Dendritic cell treated with granulocyte-macrophage colony-stimulating factor and Interleukin-4, amounts not matched to agents 40 ng/mL and 50 ng/mL, for 4 days (primary cell): ENCODE measurements at regions of chr16 and their contacts with region 1.

Region 1: GRCh38 chr16:48271728-48272127 is 24.4 kb upstream of the ABCC11 start:
- H3K4me3 Mint-ChIP-seq: no peak overlapping the region
- H3K27ac Mint-ChIP-seq: no peak overlapping the region
- H3K4me1 Mint-ChIP-seq: no peaks in the 10 kb centered on the region
- H3K27me3 Mint-ChIP-seq: no peaks in the 10 kb centered on the region

Region 2: DNA sequence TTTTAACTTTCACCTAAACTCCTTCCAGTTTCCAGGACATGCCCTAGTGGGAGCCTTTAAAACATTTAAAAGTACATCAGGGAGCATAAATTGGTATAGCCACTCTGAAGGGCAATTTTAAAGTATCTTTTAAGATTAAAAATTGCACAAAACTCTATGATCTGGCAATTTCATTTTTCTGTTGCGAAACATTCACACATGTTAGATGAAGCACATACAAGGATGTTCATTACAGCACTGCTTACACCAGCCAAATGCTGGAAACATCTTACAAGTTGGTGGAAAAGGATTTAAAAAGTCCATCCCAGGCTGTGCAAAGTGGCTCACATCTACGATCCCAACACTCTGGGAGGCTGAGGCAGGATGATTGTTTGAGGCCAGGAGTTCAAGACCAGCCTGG is 54.0 kb before region 1 on chr16:
- intact Hi-C with region 1: no loop called
- H3K4me3 Mint-ChIP-seq: no peak overlapping the region
- H3K27ac Mint-ChIP-seq: no peak overlapping the region
- H3K4me1 Mint-ChIP-seq: no peaks in the 10 kb centered on the region
- H3K27me3 Mint-ChIP-seq: no peaks in the 10 kb centered on the region

Region 3: DNA sequence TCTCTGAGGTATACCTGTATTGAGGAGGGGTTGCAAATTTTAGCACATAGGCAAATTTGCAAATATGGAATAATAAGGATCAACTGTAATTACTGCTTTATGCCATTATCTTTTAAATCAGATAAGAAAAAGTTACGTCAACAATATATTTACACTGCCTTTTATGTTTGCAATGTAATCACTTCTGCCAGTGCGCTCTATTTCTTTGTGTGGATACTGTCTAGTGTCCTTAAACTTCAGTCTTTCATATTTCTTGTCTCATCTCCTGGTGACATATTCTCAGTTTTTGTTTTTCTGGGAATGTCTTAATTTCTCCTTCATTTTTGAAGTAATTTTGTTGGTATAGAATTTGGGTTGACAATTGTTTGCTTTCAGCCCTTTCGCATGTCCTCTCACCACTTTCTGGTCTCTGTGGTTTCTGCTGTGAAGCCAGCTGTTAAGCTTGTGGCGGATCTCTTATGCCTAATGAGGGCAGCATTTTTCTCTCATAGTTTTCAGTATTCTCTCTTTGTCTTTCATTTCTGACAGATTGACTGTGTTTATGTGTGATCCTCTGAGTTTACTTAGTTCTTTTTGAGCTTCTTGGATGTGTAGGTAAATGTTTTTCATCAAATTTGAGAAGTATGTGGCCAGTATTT is 13.2 kb after region 1 on chr16:
- intact Hi-C with region 1: loop called (anchors 2 kb)
- H3K4me3 Mint-ChIP-seq: no peak overlapping the region
- H3K27ac Mint-ChIP-seq: no peak overlapping the region
- H3K4me1 Mint-ChIP-seq: no peaks in the 10 kb centered on the region
- H3K27me3 Mint-ChIP-seq: no peaks in the 10 kb centered on the region

Region 4: GRCh38 chr16:48317614-48318315 is 46.0 kb after region 1 on chr16:
- intact Hi-C with region 1: no loop called
- H3K4me3 Mint-ChIP-seq: peak overlapping the region; percentile 26
- H3K27ac Mint-ChIP-seq: peak overlapping the region; percentile 77
- H3K4me1 Mint-ChIP-seq: peaks cover 18% of the 10 kb centered on the region
- H3K27me3 Mint-ChIP-seq: no peaks in the 10 kb centered on the region

Region 5: GRCh38 chr16:48385272-48386150 is 113.8 kb after region 1 on chr16 and contains the start of gene SIAH1:
- intact Hi-C with region 1: no loop called
- H3K4me3 Mint-ChIP-seq: peak within 1 kb of the TSS; percentile 97
- H3K27ac Mint-ChIP-seq: peak within 1 kb of the TSS; percentile 100
- H3K4me1 Mint-ChIP-seq: peaks cover 54% of the 10 kb centered on the region
- H3K27me3 Mint-ChIP-seq: no peaks in the 10 kb centered on the region